ENCODE measurements at regions of chrX and their contacts with region 1.

Region 1: DNA sequence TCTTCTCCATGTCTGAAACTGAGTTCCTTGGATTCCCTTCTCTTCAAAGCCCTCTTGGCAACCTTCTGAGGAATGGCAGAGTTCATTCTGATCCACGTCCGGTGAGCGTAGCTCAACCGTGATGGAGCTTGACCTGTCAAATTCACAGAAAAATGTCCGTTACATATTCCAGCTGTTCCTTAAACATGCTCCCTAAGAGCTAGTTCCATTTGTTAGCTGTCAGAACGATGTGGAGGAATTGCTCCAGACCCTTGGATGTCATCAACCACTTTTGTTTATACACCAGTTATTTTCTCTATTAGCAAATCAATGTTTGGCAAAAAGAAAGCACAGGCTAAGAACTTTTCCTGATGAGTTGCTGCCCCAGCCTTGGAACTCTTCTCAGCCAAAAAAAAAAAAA is 50.1 kb downstream of the NHS start:
- DNase-seq: no peak
- H3K4me3 ChIP-seq: no peak overlapping the region
- H3K27ac ChIP-seq: no peak overlapping the region
- H3K4me1 ChIP-seq: no peaks in the 10 kb centered on the region
- H3K27me3 ChIP-seq: no peaks in the 10 kb centered on the region
- CTCF ChIP-seq: no peak

Region 2: GRCh38 chrX:17459661-17460060 is 34.5 kb after region 1 on chrX:
- CTCF ChIA-PET with region 1: no interaction called
- POLR2A ChIA-PET with region 1: no interaction called
- intact Hi-C with region 1: loop called (anchors 5 kb)
- DNase-seq: no peak
- H3K4me3 ChIP-seq: no peak overlapping the region
- H3K27ac ChIP-seq: no peak overlapping the region
- H3K4me1 ChIP-seq: peaks cover 23% of the 10 kb centered on the region
- H3K27me3 ChIP-seq: no peaks in the 10 kb centered on the region
- CTCF ChIP-seq: no peak

Region 3: DNA sequence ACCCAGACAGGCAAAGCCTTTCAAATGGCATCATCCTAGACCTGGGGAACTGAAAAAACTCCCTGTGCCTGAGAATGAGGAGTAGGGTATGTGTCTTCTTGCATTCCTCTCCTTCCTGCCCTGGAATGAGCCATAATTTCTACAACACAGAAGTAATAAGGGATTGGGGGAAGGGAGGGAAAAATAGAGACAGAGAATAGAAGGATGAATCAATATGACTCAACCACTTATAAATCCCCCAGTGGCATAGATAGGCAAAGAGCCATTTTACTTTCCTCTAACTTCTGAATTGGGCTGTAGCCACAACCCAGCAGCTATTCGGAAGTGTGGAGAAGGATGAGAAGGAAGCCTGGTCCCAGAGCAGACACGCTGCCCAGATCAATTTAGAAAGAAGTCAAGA is 49.8 kb after region 1 on chrX:
- CTCF ChIA-PET with region 1: no interaction called
- POLR2A ChIA-PET with region 1: no interaction called
- intact Hi-C with region 1: no loop called
- DNase-seq: no peak
- H3K4me3 ChIP-seq: no peak overlapping the region
- H3K27ac ChIP-seq: no peak overlapping the region
- H3K4me1 ChIP-seq: no peaks in the 10 kb centered on the region
- H3K27me3 ChIP-seq: no peaks in the 10 kb centered on the region
- CTCF ChIP-seq: no peak

Region 4: DNA sequence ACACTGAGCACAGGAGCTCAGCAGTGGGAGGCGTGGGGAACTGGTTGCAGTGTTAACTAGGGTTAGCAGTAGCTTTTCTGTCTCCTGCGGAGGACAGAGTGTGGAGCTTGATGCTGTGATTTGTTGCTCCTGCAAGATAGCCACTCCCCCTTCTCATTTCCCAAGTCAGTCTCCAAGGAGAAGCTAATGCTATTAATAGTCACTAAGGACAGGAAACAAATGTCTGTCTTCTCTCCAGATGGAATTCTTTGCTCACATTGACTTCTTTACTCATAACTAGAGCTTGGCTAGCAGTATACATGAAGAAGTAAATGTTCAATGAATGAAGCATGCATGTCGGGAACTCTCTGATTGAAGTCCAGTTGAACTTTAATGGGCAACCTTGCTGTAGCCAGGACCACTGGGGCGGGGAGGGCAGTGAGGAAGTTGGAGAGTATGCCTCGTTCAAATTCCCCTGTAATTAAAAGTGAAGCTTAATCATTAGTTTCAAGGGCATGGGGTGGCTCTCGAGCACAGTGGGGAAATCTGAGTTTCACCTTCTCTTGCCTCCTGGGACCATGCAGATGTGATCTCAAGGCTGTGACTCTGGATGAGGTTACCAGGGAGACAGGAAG is 155.5 kb after region 1 on chrX:
- CTCF ChIA-PET with region 1: no interaction called
- POLR2A ChIA-PET with region 1: no interaction called
- intact Hi-C with region 1: no loop called
- DNase-seq: no peak
- H3K4me3 ChIP-seq: no peak overlapping the region
- H3K27ac ChIP-seq: no peak overlapping the region
- H3K4me1 ChIP-seq: peaks cover 22% of the 10 kb centered on the region
- H3K27me3 ChIP-seq: no peaks in the 10 kb centered on the region
- CTCF ChIP-seq: no peak